Aorta (tissue), 5 donors: ENCODE measurements at regions of chr3 and their contacts with region 1.

Region 1: DNA sequence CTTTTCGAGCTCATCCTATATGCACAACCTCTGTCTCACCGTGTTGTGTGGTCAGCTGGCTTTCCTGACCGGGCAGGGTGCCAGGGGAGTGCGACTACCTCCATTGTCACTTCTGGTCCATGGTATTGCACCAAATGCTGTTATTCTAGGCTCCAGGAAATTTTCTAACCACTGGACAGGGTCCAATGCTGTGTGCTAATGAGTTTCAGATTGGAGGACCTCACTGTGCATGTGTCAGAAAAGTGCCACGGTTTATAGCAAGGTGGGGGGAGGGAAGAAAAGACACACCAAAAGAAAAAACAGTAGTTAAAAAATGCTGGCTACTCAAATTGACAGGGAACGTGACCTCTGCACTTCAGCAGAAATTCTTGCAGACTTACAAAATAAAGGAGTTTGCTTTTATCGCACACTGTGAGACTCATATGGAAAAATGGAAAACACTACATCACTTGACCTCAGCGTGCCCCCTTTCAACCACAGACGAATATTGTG is 480.1 kb downstream of the FOXP1 start:
- DNase-seq: peak; percentile 68 to 85
- ATAC-seq: no peak
- H3K4me3 ChIP-seq: no peak overlapping the region
- H3K27ac ChIP-seq: peak overlapping the region in 1 of 2 donors; percentile 91
- H3K4me1 ChIP-seq: peaks cover 17 to 26% of the 10 kb centered on the region in 2 donors
- H3K27me3 ChIP-seq: no peaks in the 10 kb centered on the region

Region 2: DNA sequence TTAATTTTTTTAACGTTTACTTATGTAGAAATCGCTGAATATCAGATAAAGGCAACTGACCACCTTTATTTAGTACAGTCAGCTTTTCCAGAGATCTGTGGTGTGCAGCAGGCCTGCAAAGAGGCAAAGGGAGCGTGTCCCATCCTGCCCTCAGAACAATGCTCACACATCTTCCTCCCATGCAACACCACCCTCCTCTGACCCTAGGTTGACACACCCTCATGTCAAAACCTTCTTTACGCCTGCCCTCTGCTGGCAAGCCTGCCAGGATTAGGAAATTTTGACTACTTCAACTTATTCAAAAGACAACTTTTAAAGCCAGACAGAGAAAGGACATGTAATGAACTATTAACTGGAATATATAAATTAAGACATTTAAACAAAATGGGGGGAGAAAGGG is 33.7 kb before region 1 on chr3:
- intact Hi-C with region 1: loop called (anchors 5 kb)
- DNase-seq: peak; percentile 72 to 82
- ATAC-seq: peak; percentile 49
- H3K4me3 ChIP-seq: no peak overlapping the region
- H3K27ac ChIP-seq: peak overlapping the region in 1 of 2 donors; percentile 61
- H3K4me1 ChIP-seq: peaks cover 8 to 11% of the 10 kb centered on the region in 2 donors
- H3K27me3 ChIP-seq: no peaks in the 10 kb centered on the region

Region 3: DNA sequence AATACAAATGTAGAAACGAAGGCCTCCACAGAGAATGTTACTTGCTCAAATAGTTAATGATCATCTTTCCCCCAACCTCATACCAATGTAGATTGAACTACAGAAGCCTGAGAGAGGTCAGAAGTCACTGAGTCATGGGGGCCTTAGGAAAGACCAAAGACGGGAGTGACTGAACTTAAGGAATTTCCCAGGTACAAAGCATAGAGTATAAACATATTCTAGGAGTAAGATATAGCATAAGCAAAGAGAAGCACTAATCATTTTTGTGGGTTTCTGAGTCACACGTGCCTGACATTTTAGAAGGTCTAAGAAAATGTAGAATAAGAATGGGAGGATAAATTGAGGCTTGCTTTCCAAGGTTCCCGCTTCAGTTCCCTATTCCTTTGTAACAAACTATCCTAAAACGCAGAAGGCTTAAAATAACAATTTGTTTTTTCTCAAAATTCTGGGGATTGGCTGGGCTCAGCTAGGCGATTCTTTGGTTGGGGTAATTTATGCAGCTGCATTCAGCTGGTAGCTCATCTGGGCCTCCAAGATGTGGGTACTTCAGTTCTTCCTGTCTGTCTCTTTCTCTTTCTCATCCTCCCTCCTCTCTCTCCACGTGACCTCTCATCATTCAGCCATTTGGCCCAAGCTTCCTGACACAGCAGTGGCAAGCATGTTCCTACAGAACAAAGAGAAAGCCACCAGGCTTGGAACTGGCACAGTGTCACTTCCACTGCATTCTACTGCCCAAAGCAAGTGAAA is 57.5 kb after region 1 on chr3:
- intact Hi-C with region 1: loop called in 1 of 2 experiments (anchors 2 kb)
- DNase-seq: no peak
- ATAC-seq: no peak
- H3K4me3 ChIP-seq: no peak overlapping the region
- H3K27ac ChIP-seq: peak overlapping the region in 1 of 2 donors; percentile 43
- H3K4me1 ChIP-seq: peaks cover 5 to 8% of the 10 kb centered on the region in 2 donors
- H3K27me3 ChIP-seq: no peaks in the 10 kb centered on the region

Region 4: GRCh38 chr3:72185549-72186399 is 1082.3 kb after region 1 on chr3:
- intact Hi-C with region 1: no loop called
- DNase-seq: peak in 1 of 2 donors; percentile 63
- ATAC-seq: no peak
- H3K4me3 ChIP-seq: no peak overlapping the region
- H3K27ac ChIP-seq: no peak overlapping the region
- H3K4me1 ChIP-seq: no peaks in the 10 kb centered on the region
- H3K27me3 ChIP-seq: no peaks in the 10 kb centered on the region